Naive thymus-derived CD4-positive, alpha-beta T cell (primary cell): ENCODE measurements at regions of chr1 and their contacts with region 1.

Region 1: DNA sequence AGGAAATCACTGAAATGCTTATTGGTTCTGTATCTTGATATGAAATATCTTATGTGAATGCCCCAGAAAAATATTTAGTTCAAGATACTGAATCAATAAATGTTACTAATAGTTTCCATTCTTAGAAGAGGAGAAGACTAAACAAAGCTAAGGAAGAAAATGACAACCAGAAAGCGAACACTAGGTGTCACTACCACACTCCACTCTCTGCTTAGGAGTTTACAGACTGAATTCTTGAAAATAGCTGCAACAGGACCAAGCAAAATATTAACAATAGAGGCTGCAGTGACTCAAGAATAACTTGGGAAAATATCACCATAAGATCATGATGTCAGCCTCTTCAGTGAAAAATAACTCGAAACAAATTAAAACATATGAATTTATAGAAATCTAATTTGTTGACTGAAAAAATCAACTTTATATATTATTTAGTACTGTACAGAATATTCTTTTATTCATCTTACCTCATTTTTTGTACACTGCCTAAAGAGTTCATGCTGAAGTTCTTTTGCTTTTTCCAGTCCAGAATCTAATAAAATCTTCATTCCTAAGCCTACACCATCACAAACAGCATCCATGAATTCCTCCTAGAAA is 61.6 kb downstream of the KIF14 start:
- DNase-seq: peak in 4 of 9 donors; percentile 10 to 26 (median 18)
- ATAC-seq: peak; percentile 48
- H3K4me3 ChIP-seq: no peak overlapping the region
- H3K4me3 Mint-ChIP-seq: no peak overlapping the region
- H3K27ac ChIP-seq: no peak overlapping the region
- H3K27ac Mint-ChIP-seq: no peak overlapping the region
- H3K4me1 ChIP-seq: no peaks in the 10 kb centered on the region
- H3K4me1 Mint-ChIP-seq: peaks cover 0 to 17% (median 6%) of the 10 kb centered on the region in 7 donors
- H3K27me3 ChIP-seq: no peaks in the 10 kb centered on the region
- H3K27me3 Mint-ChIP-seq: no peaks in the 10 kb centered on the region

Region 2: GRCh38 chr1:200290010-200290685 is 268.8 kb before region 1 on chr1:
- CTCF ChIA-PET with region 1: no interaction called
- POLR2A ChIA-PET with region 1: no interaction called
- intact Hi-C with region 1: no loop called
- DNase-seq: no peak
- ATAC-seq: no peak
- H3K4me3 ChIP-seq: no peak overlapping the region
- H3K4me3 Mint-ChIP-seq: no peak overlapping the region
- H3K27ac ChIP-seq: no peak overlapping the region
- H3K27ac Mint-ChIP-seq: no peak overlapping the region
- H3K4me1 ChIP-seq: no peaks in the 10 kb centered on the region
- H3K4me1 Mint-ChIP-seq: peaks cover 0 to 10% (median 0%) of the 10 kb centered on the region in 7 donors
- H3K27me3 ChIP-seq: no peaks in the 10 kb centered on the region
- H3K27me3 Mint-ChIP-seq: peaks cover 0 to 14% (median 0%) of the 10 kb centered on the region in 5 donors

Region 3: DNA sequence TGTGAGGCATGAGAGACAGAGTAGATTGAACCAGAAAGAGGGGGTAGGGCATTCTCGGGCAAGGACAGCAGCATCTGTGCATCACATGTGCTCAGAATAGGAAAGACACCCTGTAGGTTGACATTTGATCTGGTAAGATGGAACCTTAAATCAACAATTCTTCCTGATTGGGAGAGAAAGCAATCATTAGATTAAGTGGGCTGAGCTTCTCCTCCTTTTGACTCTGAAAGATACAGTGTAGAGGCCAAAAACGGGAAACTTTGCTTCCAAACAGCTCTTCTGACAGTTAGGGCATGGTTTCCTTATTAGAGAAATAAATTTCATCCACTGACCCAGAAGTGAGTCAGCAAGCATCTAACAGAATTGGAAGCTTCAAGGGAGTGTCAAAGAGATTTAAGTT is 51.9 kb after region 1 on chr1:
- CTCF ChIA-PET with region 1: interaction called, 5 read pairs
- POLR2A ChIA-PET with region 1: no interaction called
- intact Hi-C with region 1: loop called in 1 of 2 experiments (anchors 5 kb)
- DNase-seq: no peak
- ATAC-seq: no peak
- H3K4me3 ChIP-seq: no peak overlapping the region
- H3K4me3 Mint-ChIP-seq: no peak overlapping the region
- H3K27ac ChIP-seq: no peak overlapping the region
- H3K27ac Mint-ChIP-seq: no peak overlapping the region
- H3K4me1 ChIP-seq: no peaks in the 10 kb centered on the region
- H3K4me1 Mint-ChIP-seq: peaks cover 0 to 2% (median 0%) of the 10 kb centered on the region in 7 donors
- H3K27me3 ChIP-seq: no peaks in the 10 kb centered on the region
- H3K27me3 Mint-ChIP-seq: no peaks in the 10 kb centered on the region